GM12878 (cell line): ENCODE measurements at regions of chr10 and their contacts with region 1.

Region 1: GRCh38 chr10:34235164-34235832 is 579.8 kb downstream of the PARD3 start:
- DNase-seq: no peak
- ATAC-seq: 0 out of 3 replicates have a peak, but pooled peaks have one; percentile 36
- H3K4me3 ChIP-seq: no peak overlapping the region
- H3K27ac ChIP-seq: no peak overlapping the region
- H3K4me1 ChIP-seq: no peaks in the 10 kb centered on the region
- H3K27me3 ChIP-seq: no peaks in the 10 kb centered on the region
- CTCF ChIP-seq: no peak
- EP300 ChIP-seq: no peak
- POLR2A ChIP-seq: no peak
- RAD21 ChIP-seq: no peak

Region 2: GRCh38 chr10:34223658-34224057 is 11.6 kb before region 1 on chr10:
- CTCF ChIA-PET with region 1: interaction called, 14 read pairs
- POLR2A ChIA-PET with region 1: no interaction called
- RAD21 ChIA-PET with region 1: interaction called, 12 read pairs
- SMC1A ChIA-PET with region 1: interaction called, 38 read pairs
- in situ Hi-C with region 1: no loop called
- intact Hi-C with region 1: no loop called
- DNase-seq: no peak
- ATAC-seq: peak; percentile 53
- H3K4me3 ChIP-seq: no peak overlapping the region
- H3K27ac ChIP-seq: no peak overlapping the region
- H3K4me1 ChIP-seq: no peaks in the 10 kb centered on the region
- H3K27me3 ChIP-seq: no peaks in the 10 kb centered on the region; a peak in 1 of 4 replicates
- CTCF ChIP-seq: no peak; a peak in 1 of 6 replicates
- EP300 ChIP-seq: no peak
- POLR2A ChIP-seq: no peak
- RAD21 ChIP-seq: no peak

Region 3: GRCh38 chr10:34249634-34250033 is 14.3 kb after region 1 on chr10:
- CTCF ChIA-PET with region 1: interaction called, 13 read pairs
- POLR2A ChIA-PET with region 1: interaction called, 4 read pairs
- RAD21 ChIA-PET with region 1: interaction called, 3 read pairs
- SMC1A ChIA-PET with region 1: interaction called, 17 read pairs
- in situ Hi-C with region 1: no loop called
- intact Hi-C with region 1: no loop called
- DNase-seq: no peak
- ATAC-seq: peak; percentile 76
- H3K4me3 ChIP-seq: no peak overlapping the region
- H3K27ac ChIP-seq: no peak overlapping the region
- H3K4me1 ChIP-seq: no peaks in the 10 kb centered on the region
- H3K27me3 ChIP-seq: no peaks in the 10 kb centered on the region
- CTCF ChIP-seq: peak in 2 of 3 experiments; percentile 7 to 18; a peak in 1 of 6 replicates
- EP300 ChIP-seq: no peak
- POLR2A ChIP-seq: no peak
- RAD21 ChIP-seq: no peak